ENCODE measurements at regions of chr11 and their contacts with region 1.

Region 1: GRCh38 chr11:47642099-47642855 is at the start of gene MTCH2:
- DNase-seq: peak; percentile 95 to 98
- ATAC-seq: peak; percentile 97 to 99 (median 98)
- H3K4me3 ChIP-seq: peak within 1 kb of the TSS; percentile 89
- H3K27ac ChIP-seq: peak within 1 kb of the TSS; percentile 95
- H3K4me1 ChIP-seq: peaks cover 12% of the 10 kb centered on the region
- H3K27me3 ChIP-seq: no peaks in the 10 kb centered on the region
- CTCF ChIP-seq: peak; percentile 29
- total RNA-seq, gene MTCH2: 75.2 to 147 (median 100) TPM

Region 2: GRCh38 chr11:47750725-47751124 is 108.4 kb after region 1 on chr11:
- intact Hi-C with region 1: no loop called
- DNase-seq: no peak
- ATAC-seq: no peak
- H3K4me3 ChIP-seq: no peak overlapping the region
- H3K27ac ChIP-seq: no peak overlapping the region
- H3K4me1 ChIP-seq: no peaks in the 10 kb centered on the region
- H3K27me3 ChIP-seq: no peaks in the 10 kb centered on the region
- CTCF ChIP-seq: no peak

Region 3: DNA sequence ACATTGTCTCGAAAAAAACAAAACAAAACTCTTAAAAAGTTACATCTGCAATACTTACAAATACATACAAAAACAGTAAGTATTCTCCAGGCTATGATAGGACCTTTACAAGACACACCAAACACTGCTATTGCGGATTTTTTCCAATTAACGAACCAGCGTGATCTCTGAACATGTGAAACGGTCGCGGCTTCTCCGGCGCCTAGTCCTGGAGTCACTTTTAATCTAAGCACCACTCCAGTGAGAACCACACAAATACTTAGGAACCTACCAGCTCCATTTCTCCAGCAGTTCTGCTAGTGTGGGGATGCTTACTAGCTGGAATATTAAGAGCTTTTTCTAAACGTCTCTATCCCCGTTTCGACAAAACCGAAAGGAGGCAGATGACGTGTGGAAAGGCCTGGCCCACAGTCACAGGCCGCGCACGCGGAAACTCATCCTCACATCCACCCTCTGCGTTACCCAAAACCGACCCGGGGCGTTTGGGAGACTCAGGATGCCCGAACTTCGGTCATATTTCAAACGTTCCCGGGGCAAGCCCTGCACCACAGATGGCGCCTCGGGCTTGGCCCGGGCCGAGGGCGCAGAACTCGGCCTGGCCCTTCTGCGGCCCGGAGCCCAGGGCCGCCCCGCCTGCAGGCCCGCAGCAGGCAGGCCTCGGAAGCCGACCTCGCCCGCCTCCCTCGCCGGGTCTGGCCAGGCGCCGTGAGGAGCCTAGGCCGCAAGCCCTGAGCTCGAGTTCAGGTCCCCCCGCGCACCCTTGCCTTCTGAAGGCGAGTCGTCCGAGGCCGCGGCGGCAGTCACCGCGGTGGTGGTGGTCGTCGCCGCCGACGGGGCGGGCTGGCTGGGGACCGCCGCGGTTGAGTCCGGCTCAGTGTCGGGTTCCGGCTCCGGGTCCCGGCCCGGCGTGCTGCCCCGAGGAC is 124.3 kb after region 1 on chr11:
- intact Hi-C with region 1: loop called (anchors 5 kb)
- DNase-seq: peak; percentile 75 to 83
- ATAC-seq: peak; percentile 22 to 48 (median 38)
- H3K4me3 ChIP-seq: peak overlapping the region; percentile 86
- H3K27ac ChIP-seq: peak overlapping the region; percentile 99
- H3K4me1 ChIP-seq: peaks cover 17% of the 10 kb centered on the region
- H3K27me3 ChIP-seq: no peaks in the 10 kb centered on the region
- CTCF ChIP-seq: no peak

Region 4: GRCh38 chr11:47847892-47848635 is 205.8 kb after region 1 on chr11 and contains the start of gene NUP160:
- intact Hi-C with region 1: loop called (anchors 5 kb)
- DNase-seq: peak; percentile 86 to 92
- ATAC-seq: peak; percentile 91 to 96 (median 92)
- H3K4me3 ChIP-seq: peak within 1 kb of the TSS; percentile 82
- H3K27ac ChIP-seq: peak within 1 kb of the TSS; percentile 93
- H3K4me1 ChIP-seq: peaks cover 40% of the 10 kb centered on the region
- H3K27me3 ChIP-seq: no peaks in the 10 kb centered on the region
- CTCF ChIP-seq: no peak
- total RNA-seq, gene NUP160: 9.0 to 14.0 (median 12.1) TPM